ENCODE measurements at regions of chr21 and their contacts with region 1.

Region 1: GRCh38 chr21:39445321-39446269 is at the start of gene LCA5L:
- DNase-seq: peak; percentile 91 to 96
- ATAC-seq: peak; percentile 88 to 95 (median 91)
- H3K4me3 ChIP-seq: peak within 1 kb of the TSS; percentile 73
- H3K4me3 Mint-ChIP-seq: peak within 1 kb of the TSS; percentile 95
- H3K27ac ChIP-seq: peak within 1 kb of the TSS; percentile 95
- H3K27ac Mint-ChIP-seq: peak within 1 kb of the TSS; percentile 93 to 94
- H3K4me1 ChIP-seq: peaks cover 9% of the 10 kb centered on the region
- H3K4me1 Mint-ChIP-seq: peaks cover 11 to 15% of the 10 kb centered on the region in 2 donors
- H3K27me3 ChIP-seq: no peaks in the 10 kb centered on the region
- H3K27me3 Mint-ChIP-seq: peaks cover 22 to 41% of the 10 kb centered on the region in 2 donors
- CTCF ChIP-seq: no peak
- total RNA-seq, gene LCA5L: 0.14 to 0.84 TPM in 2 of 3 donors, not detected in the other

Region 2: DNA sequence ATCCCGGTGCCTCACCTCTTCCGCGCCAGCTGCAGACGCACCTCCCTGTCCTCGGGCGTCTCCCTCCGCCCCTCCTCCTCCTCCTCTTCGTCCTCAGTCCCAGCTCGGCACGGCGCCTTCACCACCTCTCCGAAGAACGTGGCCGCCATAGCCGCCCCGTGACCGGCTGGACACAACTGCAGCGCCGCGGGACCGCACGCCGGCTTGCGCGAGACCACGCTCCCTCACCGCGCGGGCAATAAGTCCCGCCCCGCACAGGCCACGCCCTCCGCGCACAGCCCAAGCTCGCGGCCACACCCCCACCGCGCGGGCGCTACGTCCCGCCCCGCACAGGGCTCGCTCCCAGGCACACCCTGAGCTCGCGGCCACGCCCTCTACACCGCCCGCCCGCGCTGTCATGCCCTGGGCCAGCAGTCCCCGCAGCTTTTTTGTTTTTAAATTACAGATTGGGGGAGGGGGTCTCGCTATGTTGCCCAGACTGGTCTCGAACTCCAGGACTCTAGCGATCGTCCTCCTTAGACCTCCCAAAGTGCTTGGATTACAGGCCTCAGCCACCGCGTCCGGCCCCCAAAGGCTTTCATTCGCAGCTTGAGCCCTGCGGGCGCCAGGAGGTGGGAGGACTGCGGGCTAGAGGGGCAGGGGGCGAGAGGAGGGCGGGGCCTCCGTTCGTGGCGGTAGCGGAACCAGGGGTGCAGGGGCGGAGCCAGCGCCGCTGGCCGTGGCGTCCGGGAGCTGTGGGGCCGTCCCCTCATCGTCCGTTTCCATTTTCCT is 262.2 kb before region 1 on chr21 and contains the start of gene PSMG1:
- intact Hi-C with region 1: loop called (anchors 5 kb)
- DNase-seq: peak; percentile 92 to 96
- ATAC-seq: peak; percentile 88 to 98 (median 91)
- H3K4me3 ChIP-seq: peak within 1 kb of the TSS; percentile 83
- H3K4me3 Mint-ChIP-seq: peak within 1 kb of the TSS; percentile 98
- H3K27ac ChIP-seq: peak within 1 kb of the TSS; percentile 81
- H3K27ac Mint-ChIP-seq: peak within 1 kb of the TSS; percentile 93 to 95
- H3K4me1 ChIP-seq: peaks cover 8% of the 10 kb centered on the region
- H3K4me1 Mint-ChIP-seq: peaks cover 29 to 48% of the 10 kb centered on the region in 2 donors
- H3K27me3 ChIP-seq: no peaks in the 10 kb centered on the region
- H3K27me3 Mint-ChIP-seq: no peaks in the 10 kb centered on the region
- CTCF ChIP-seq: no peak
- total RNA-seq, gene PSMG1: 11.3 to 12.1 (median 12.0) TPM

Measured in natural killer cell (primary cell).